CD4-positive, alpha-beta T cell (primary cell): ENCODE measurements at regions of chr3 and their contacts with region 1.

Region 1: DNA sequence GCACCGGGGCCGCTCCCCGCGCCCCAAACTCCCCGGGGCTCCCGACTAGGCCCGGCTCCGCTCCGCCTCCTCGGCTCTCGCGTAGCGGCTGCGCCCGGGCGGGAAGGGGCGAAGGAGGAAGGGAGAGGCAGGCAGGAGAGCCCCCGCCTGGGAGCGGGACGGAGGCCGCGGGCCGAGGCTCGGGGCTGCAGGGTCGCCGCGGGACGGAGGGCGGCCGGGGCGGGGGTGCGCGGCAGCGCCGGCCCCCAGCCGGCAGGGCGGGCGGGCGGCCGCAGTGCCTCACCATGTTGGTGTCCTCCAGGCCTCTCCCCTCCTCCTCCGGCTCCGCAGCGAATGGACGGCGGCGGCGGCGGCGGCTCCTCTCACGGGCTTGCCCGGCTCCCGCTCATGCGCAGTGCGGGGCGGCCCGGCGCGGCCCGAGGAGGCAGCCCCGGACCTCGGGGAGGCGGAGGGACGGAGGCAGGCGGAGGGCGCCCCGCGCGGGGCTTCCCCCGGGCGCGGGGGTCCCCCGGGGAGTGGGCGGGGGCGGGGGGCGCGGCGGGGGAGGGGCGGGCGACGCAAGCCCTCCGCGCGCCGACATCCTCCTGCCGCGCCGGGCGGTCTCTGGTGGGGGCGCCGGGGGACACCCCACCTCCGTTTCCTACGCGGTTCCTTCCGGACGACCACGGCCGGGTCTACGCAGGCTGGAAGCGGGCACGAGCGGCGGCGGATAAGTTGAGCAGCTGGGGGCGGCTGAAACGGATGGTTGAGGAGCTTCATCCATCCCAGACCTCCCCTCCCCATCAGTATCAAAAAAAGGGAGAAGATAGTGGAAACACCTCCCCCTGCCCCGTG is at the start of gene DCUN1D1:
- DNase-seq: peak; percentile 78 to 94 (median 86)
- ATAC-seq: peak; percentile 85
- H3K4me3 ChIP-seq: peak within 1 kb of the TSS; percentile 93
- H3K4me3 Mint-ChIP-seq: peak within 1 kb of the TSS; percentile 97
- H3K27ac ChIP-seq: peak within 1 kb of the TSS in 1 of 2 donors; percentile 39
- H3K27ac Mint-ChIP-seq: peak within 1 kb of the TSS; percentile 82
- H3K4me1 ChIP-seq: peaks cover 31% of the 10 kb centered on the region
- H3K4me1 Mint-ChIP-seq: peaks cover 44% of the 10 kb centered on the region
- H3K27me3 ChIP-seq: no peaks in the 10 kb centered on the region
- H3K27me3 Mint-ChIP-seq: no peaks in the 10 kb centered on the region
- CTCF ChIP-seq: no peak
- total RNA-seq, gene DCUN1D1: 35.4 to 38.9 TPM

Region 2: DNA sequence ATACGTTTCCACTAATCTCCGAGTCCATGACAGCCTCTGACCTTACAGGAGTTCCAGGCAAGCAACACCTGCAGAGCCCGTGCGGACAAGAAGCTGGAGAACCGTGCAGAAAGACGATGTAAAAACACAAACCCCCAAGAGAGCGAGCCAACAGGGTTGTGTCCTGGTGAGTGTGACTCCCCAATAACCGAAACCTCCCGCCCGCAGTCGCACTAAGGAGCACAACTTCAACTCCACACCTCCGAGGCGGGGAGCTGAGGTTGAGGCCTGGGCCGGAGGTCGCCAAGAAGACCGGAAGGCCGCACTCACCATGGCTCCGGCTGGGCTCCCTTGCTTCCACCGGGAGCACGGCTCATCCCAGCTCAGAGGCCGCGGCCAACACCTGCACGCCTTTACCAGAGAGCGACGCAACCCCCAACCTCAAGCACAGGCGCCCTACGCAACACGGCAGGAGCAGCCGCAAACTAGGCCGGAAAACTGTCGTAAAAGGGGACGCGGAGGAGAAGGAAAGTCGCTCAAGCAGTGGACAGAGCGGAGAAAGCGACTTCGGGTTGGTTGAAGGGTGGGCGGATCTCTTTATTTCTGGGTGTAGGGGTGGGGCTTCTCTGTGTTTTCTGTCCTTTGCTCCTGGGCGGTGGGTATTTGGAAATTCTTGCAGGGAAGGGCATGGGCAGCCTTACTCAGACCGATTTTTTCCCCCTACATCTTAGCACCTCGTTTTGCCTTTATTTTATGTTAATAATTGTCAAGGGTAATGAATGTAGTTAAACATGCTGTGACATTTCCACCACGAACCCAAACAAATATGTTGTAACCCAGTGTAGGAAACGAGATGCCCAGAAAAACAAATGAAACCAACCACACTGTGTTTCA is 1990.9 kb before region 1 on chr3 and contains the start of gene DNAJC19:
- CTCF ChIA-PET with region 1: no interaction called
- POLR2A ChIA-PET with region 1: no interaction called
- intact Hi-C with region 1: loop called in 1 of 2 experiments (anchors 10 kb)
- DNase-seq: peak; percentile 82 to 97 (median 85)
- ATAC-seq: peak; percentile 96
- H3K4me3 ChIP-seq: peak within 1 kb of the TSS; percentile 85
- H3K4me3 Mint-ChIP-seq: peak within 1 kb of the TSS; percentile 99
- H3K27ac ChIP-seq: peak within 1 kb of the TSS; percentile 65 to 66
- H3K27ac Mint-ChIP-seq: peak within 1 kb of the TSS; percentile 94
- H3K4me1 ChIP-seq: peaks cover 8% of the 10 kb centered on the region
- H3K4me1 Mint-ChIP-seq: peaks cover 50% of the 10 kb centered on the region
- H3K27me3 ChIP-seq: no peaks in the 10 kb centered on the region
- H3K27me3 Mint-ChIP-seq: peaks cover 5% of the 10 kb centered on the region
- CTCF ChIP-seq: no peak
- total RNA-seq, gene DNAJC19: 28.7 to 40.2 TPM

Region 3: DNA sequence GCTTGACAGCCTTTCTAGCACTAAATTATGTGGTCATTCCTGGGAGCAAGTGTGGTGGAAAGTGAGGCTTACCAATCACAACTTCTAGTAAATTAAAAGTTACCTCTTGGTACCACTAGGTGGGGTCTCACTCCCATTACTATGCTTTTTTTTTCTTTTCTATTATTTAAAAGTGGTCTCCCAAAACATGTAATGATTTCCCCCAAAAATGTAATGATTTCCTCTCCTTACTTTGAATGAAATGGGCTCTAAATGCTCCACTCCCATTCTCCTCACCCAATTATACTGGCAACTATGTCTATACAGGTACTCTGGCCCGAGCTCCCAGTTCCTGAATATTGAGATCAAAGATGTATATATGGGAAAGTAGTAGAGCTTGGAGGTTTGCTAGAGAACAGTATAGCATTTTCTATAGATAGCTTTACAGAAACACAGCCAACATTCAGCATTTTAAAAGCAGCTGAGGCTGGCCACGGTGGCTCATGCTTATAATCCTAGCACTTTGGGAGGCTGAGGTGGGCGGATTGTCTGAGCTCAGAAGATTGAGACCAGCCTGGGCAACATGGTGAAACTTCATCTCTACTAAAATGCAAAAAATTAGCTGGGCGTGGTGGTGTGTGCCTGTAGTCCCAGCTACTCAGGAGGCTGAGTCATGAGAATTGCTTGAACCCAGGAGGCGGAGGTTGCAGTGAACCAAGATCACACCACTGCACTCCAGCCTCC is 70.9 kb before region 1 on chr3:
- CTCF ChIA-PET with region 1: no interaction called
- POLR2A ChIA-PET with region 1: interaction called, 3 read pairs
- intact Hi-C with region 1: loop called in 1 of 2 experiments (anchors 5 kb)
- DNase-seq: peak in 3 of 14 experiments; percentile 30 to 34 (median 34)
- ATAC-seq: peak; percentile 30
- H3K4me3 ChIP-seq: no peak overlapping the region
- H3K4me3 Mint-ChIP-seq: no peak overlapping the region
- H3K27ac ChIP-seq: no peak overlapping the region
- H3K27ac Mint-ChIP-seq: peak overlapping the region; percentile 66
- H3K4me1 ChIP-seq: peaks cover 21% of the 10 kb centered on the region
- H3K4me1 Mint-ChIP-seq: peaks cover 51% of the 10 kb centered on the region
- H3K27me3 ChIP-seq: no peaks in the 10 kb centered on the region
- H3K27me3 Mint-ChIP-seq: no peaks in the 10 kb centered on the region
- CTCF ChIP-seq: peak; percentile 71